CD8-positive, alpha-beta T cell (primary cell): ENCODE measurements at regions of chr12 and their contacts with region 1.

Region 1: GRCh38 chr12:45762185-45763110 is 32.9 kb downstream of the ARID2 start:
- DNase-seq: peak in 2 of 9 experiments; percentile 37 to 53
- ATAC-seq: peak; percentile 38
- H3K4me3 ChIP-seq: no peak overlapping the region
- H3K4me3 Mint-ChIP-seq: no peak overlapping the region
- H3K27ac ChIP-seq: no peak overlapping the region
- H3K27ac Mint-ChIP-seq: no peak overlapping the region
- H3K4me1 ChIP-seq: peaks cover 5% of the 10 kb centered on the region
- H3K4me1 Mint-ChIP-seq: peaks cover 61% of the 10 kb centered on the region
- H3K27me3 ChIP-seq: no peaks in the 10 kb centered on the region
- H3K27me3 Mint-ChIP-seq: no peaks in the 10 kb centered on the region
- CTCF ChIP-seq: peak; percentile 29

Region 2: DNA sequence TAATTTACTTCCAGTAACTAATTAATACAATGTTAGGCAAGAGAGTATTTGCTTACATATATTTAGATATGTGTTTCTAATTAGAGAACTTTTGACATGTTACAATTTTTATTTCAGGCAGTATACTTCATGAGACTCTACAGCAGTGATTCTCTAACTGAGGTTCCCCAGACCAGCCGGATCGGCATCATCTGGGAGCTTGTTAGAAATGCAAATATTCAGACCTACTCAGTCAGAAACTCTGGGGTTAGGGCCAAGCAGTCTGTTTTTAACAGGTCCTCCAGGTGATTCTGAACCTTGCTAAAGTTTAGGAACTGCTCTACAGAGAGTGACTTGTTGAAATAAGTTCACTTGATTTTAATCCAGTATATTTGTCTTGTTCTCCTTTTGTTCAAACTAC is 13.5 kb after region 1 on chr12:
- CTCF ChIA-PET with region 1: interaction called, 3 read pairs
- POLR2A ChIA-PET with region 1: interaction called, 3 read pairs
- intact Hi-C with region 1: loop called in 1 of 2 experiments (anchors 2 kb)
- DNase-seq: no peak
- ATAC-seq: no peak
- H3K4me3 ChIP-seq: no peak overlapping the region
- H3K4me3 Mint-ChIP-seq: no peak overlapping the region
- H3K27ac ChIP-seq: no peak overlapping the region
- H3K27ac Mint-ChIP-seq: no peak overlapping the region
- H3K4me1 ChIP-seq: no peaks in the 10 kb centered on the region
- H3K4me1 Mint-ChIP-seq: peaks cover 54% of the 10 kb centered on the region
- H3K27me3 ChIP-seq: no peaks in the 10 kb centered on the region
- H3K27me3 Mint-ChIP-seq: no peaks in the 10 kb centered on the region
- CTCF ChIP-seq: no peak

Region 3: DNA sequence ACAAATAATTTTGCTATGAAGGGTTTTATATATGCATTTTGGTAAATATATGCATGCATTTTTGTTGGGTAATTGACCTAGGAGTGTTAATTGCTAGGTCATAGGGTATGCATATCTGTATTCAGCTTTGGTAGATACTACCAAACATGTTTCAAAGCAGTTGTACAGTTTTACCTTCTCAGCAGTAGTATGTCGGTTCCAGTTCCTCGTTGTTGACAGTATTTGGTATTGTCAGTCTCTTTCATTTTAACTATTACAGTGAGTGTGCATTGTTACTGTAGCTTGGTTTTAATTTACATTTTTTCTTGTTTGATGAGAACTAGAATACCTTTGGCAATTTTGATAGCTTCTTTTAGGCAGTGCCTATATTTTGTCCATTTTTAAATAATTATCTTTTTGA is 66.0 kb after region 1 on chr12:
- CTCF ChIA-PET with region 1: no interaction called
- POLR2A ChIA-PET with region 1: no interaction called
- intact Hi-C with region 1: no loop called
- DNase-seq: no peak
- ATAC-seq: no peak
- H3K4me3 ChIP-seq: no peak overlapping the region
- H3K4me3 Mint-ChIP-seq: no peak overlapping the region
- H3K27ac ChIP-seq: no peak overlapping the region
- H3K27ac Mint-ChIP-seq: no peak overlapping the region
- H3K4me1 ChIP-seq: no peaks in the 10 kb centered on the region
- H3K4me1 Mint-ChIP-seq: peaks cover 16% of the 10 kb centered on the region
- H3K27me3 ChIP-seq: no peaks in the 10 kb centered on the region
- H3K27me3 Mint-ChIP-seq: no peaks in the 10 kb centered on the region
- CTCF ChIP-seq: no peak

Region 4: DNA sequence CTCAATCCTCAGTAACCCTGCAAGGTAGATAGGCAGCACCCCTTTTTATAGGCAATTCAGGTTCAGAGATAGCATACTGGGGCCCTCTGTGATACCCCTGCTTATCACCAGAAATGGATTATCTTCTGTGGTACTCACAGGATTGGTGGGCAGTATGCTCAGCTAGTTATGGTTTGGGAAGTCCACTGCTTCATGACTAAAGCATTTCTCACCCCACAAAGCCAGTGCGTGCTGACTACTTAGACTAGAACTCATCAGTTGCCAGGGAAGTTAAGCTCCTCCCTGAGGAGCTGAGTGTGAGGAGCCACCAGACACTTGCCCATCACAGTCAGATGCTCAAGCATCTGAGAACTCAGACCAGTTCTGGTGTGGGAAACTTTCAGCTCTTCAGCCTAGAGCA is 151.6 kb after region 1 on chr12:
- CTCF ChIA-PET with region 1: no interaction called
- POLR2A ChIA-PET with region 1: no interaction called
- intact Hi-C with region 1: loop called in 1 of 2 experiments (anchors 10 kb)
- DNase-seq: no peak
- ATAC-seq: no peak
- H3K4me3 ChIP-seq: no peak overlapping the region
- H3K4me3 Mint-ChIP-seq: no peak overlapping the region
- H3K27ac ChIP-seq: no peak overlapping the region
- H3K27ac Mint-ChIP-seq: peak overlapping the region; percentile 56
- H3K4me1 ChIP-seq: no peaks in the 10 kb centered on the region
- H3K4me1 Mint-ChIP-seq: peaks cover 2% of the 10 kb centered on the region
- H3K27me3 ChIP-seq: no peaks in the 10 kb centered on the region
- H3K27me3 Mint-ChIP-seq: no peaks in the 10 kb centered on the region
- CTCF ChIP-seq: no peak